ENCODE measurements at regions of chr11 and their contacts with region 1.

Region 1: GRCh38 chr11:18526521-18527296 is at the start of gene TSG101:
- DNase-seq: peak; percentile 95
- ATAC-seq: peak; percentile 90
- H3K4me3 Mint-ChIP-seq: peak within 1 kb of the TSS; percentile 99
- H3K27ac Mint-ChIP-seq: peak within 1 kb of the TSS; percentile 100
- H3K4me1 Mint-ChIP-seq: peaks cover 49% of the 10 kb centered on the region
- H3K27me3 Mint-ChIP-seq: no peaks in the 10 kb centered on the region
- total RNA-seq, gene TSG101: 39.2 to 85.0 TPM

Region 2: DNA sequence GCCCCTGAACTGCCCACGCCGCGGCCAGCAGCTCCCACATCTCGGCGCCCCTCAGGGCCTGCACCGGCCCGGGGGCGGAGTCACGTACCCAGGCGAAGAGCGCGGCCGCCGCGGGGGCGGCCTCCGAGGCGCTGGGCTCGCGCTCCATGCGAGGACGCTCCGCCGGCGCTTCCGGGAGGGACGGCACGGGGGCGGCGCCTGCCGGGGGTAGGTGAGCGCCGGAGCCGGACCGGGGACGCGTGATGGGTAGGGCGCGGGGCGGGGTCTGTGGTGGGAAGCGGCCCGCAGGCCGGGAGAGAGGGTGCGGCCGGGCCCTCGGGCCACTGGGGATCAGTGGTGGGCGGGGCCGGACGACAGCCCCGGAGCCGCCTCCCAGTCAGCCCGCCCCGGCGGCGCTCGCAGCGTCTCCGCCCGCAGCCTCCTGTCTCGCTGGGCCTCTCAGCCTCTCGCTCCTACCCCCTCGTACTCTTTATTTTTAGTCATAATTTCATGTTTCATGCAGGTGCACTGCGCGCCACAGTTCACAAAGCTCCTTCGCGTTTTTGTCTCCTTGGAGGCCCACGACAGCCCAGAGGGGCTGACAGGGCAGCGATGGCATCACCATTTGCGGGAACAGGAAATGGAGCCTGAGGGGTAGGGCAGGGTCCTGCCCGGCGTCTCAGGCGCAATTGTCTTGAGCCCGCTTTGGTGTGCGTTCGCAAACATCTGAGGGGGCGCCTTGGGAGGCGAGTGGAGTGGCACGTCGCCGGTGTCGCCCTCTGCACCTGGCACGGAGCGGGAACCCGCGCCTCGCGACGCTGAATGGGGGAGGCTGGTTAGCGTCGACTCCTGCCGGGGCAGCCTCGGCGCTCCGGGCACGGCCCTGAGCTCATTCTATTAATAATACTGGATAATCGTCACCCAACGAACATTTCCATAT is 513.6 kb before region 1 on chr11 and contains the start of gene SERGEF:
- CTCF ChIA-PET with region 1: no interaction called
- POLR2A ChIA-PET with region 1: no interaction called
- intact Hi-C with region 1: loop called (anchors 1 to 10 kb)
- DNase-seq: peak; percentile 96
- ATAC-seq: peak; percentile 93
- H3K4me3 Mint-ChIP-seq: peak within 1 kb of the TSS; percentile 85
- H3K27ac Mint-ChIP-seq: peak within 1 kb of the TSS; percentile 98
- H3K4me1 Mint-ChIP-seq: peaks cover 39% of the 10 kb centered on the region
- H3K27me3 Mint-ChIP-seq: no peaks in the 10 kb centered on the region
- total RNA-seq, gene SERGEF: 47.5 to 57.5 TPM

Region 3: DNA sequence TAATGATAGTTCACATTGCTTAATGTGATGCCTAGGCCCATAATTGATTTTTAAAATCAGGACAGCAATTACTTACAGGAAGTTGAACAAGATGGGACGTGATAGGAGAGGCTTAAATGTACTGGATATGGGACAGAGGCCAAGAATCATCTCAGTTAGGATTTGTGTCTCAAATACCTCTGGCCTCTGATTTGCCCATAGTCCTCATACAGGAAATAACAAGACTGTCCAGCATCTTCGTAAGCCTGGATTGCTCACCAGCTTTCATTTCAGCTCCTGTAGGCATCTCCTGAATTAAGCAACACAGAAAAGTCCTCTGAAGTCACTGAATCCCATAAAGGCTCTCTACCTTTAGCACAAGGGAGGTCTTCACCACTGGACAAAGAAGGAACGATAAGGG is 394.4 kb before region 1 on chr11 and contains the start of gene MRGPRX3:
- CTCF ChIA-PET with region 1: no interaction called
- POLR2A ChIA-PET with region 1: no interaction called
- intact Hi-C with region 1: no loop called
- DNase-seq: no peak
- ATAC-seq: no peak
- H3K4me3 Mint-ChIP-seq: no peak within 1 kb of the TSS
- H3K27ac Mint-ChIP-seq: no peak within 1 kb of the TSS
- H3K4me1 Mint-ChIP-seq: no peaks in the 10 kb centered on the region
- H3K27me3 Mint-ChIP-seq: peaks cover 32% of the 10 kb centered on the region
- total RNA-seq, gene MRGPRX3: not detected

Region 4: GRCh38 chr11:18321980-18322711 is 204.6 kb before region 1 on chr11 and contains the starts of genes GTF2H1 and HPS5:
- CTCF ChIA-PET with region 1: interaction called, 4 read pairs
- POLR2A ChIA-PET with region 1: interaction called, 4 read pairs
- intact Hi-C with region 1: loop called (anchors 1 to 2 kb)
- DNase-seq: peak; percentile 97
- ATAC-seq: peak; percentile 89
- H3K4me3 Mint-ChIP-seq: peak within 1 kb of the TSS; percentile 92
- H3K27ac Mint-ChIP-seq: peak within 1 kb of the TSS; percentile 100
- H3K4me1 Mint-ChIP-seq: peaks cover 59% of the 10 kb centered on the region
- H3K27me3 Mint-ChIP-seq: no peaks in the 10 kb centered on the region
- total RNA-seq, gene GTF2H1: 48.2 to 57.9 TPM
- total RNA-seq, gene HPS5: 14.3 to 16.1 TPM

Region 5: DNA sequence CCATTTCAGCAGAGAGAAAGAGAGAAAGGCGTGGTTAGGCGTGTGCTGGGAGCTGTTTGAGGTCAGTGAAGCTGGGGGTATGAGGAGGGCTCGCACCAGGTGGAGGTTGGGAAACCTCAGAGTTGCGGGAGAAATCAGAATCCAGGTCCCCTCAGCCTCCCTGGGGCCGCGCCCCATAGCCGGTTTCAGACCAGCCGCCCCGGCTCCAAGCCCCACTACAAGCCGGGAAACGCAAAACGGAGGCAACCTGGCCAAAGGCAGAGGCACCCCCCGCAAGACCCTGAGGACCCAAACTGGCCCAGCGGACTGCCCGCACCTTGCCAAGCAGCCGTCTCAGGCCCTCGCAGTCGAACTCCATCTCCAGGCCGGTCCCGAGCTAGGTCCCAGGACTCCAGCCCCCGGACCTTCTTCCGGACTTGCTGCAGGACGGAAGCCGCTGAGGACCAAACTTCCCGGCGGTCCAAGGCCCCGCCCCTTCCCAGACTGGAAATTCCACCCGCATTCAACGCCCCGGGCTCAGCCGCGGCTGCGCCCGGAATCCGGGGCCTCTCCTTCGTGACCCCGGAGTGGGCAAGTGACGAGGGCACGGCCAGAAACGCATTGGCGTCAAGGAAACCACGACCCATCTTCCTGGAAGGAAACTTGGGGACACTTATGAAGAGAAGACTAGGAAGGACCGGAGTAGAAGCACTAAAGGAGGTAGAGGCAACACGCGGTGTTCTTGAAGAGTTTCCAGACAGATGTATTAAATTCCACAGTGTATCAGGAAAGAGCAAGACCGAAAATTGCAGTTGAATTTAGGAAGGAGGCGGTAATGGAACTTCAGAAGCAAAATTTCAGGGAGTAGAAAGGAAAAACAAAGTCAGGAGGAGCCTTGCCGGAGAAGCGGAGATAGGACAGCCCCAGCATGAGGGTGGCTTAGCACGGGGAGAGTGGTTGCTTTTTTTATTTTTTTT is 61.9 kb after region 1 on chr11 and contains the start of gene UEVLD:
- CTCF ChIA-PET with region 1: no interaction called
- POLR2A ChIA-PET with region 1: interaction called, 3 read pairs
- intact Hi-C with region 1: loop called (anchors 1 to 2 kb)
- DNase-seq: peak; percentile 79
- ATAC-seq: peak; percentile 54
- H3K4me3 Mint-ChIP-seq: no peak within 1 kb of the TSS
- H3K27ac Mint-ChIP-seq: no peak within 1 kb of the TSS
- H3K4me1 Mint-ChIP-seq: peaks cover 12% of the 10 kb centered on the region
- H3K27me3 Mint-ChIP-seq: no peaks in the 10 kb centered on the region
- total RNA-seq, gene UEVLD: 14.3 to 16.0 TPM

Region 6: DNA sequence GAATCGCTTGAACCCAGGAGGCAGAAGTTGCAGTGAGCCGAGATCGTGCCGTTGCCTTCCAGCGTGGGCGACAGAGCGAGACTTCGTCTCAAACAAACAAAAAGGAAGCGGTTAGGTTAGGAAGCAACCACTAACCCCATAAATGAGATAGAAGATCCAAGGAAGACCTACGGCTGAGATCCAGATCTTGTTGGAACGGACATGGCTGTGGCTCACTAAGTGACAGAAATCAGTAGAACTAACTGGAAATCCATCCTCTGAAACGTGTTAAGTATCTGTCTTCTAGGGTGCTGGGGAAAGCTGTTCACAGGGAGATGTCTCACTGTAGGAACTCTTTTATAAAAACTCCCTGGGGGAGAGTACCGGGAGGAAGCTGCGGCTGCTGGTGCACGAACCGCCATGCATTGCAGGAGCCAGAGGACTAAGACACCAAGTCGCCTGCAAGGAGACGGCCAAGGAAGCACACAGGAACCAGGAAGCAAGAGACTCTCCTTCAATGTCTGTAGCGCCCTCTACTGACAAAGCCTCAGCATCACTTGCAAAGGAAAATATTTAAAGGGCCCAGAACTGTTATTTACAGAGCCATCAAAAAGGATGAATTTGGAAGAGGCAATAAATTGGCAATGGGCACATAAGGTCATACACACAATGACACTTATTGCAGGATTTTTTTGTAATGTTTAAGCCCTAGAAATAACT is 124.3 kb after region 1 on chr11:
- CTCF ChIA-PET with region 1: interaction called, 4 read pairs
- POLR2A ChIA-PET with region 1: no interaction called
- intact Hi-C with region 1: loop called (anchors 1 to 5 kb)
- DNase-seq: peak; percentile 66
- ATAC-seq: peak; percentile 74
- H3K4me3 Mint-ChIP-seq: no peak overlapping the region
- H3K27ac Mint-ChIP-seq: no peak overlapping the region
- H3K4me1 Mint-ChIP-seq: no peaks in the 10 kb centered on the region
- H3K27me3 Mint-ChIP-seq: no peaks in the 10 kb centered on the region

Region 7: GRCh38 chr11:18768472-18768901 is 241.8 kb after region 1 on chr11:
- CTCF ChIA-PET with region 1: interaction called, 4 read pairs
- POLR2A ChIA-PET with region 1: no interaction called
- intact Hi-C with region 1: loop called in 1 of 2 experiments (anchors 2 kb)
- DNase-seq: no peak
- ATAC-seq: peak; percentile 63
- H3K4me3 Mint-ChIP-seq: no peak overlapping the region
- H3K27ac Mint-ChIP-seq: no peak overlapping the region
- H3K4me1 Mint-ChIP-seq: peaks cover 11% of the 10 kb centered on the region
- H3K27me3 Mint-ChIP-seq: peaks cover 19% of the 10 kb centered on the region

Measured in activated CD4-positive, alpha-beta T cell treated with anti-CD3 and anti-CD28 coated beads for 36 hours (primary cell).